Caco-2 (cell line): ENCODE measurements at regions of chr1 and their contacts with region 1.

Region 1: DNA sequence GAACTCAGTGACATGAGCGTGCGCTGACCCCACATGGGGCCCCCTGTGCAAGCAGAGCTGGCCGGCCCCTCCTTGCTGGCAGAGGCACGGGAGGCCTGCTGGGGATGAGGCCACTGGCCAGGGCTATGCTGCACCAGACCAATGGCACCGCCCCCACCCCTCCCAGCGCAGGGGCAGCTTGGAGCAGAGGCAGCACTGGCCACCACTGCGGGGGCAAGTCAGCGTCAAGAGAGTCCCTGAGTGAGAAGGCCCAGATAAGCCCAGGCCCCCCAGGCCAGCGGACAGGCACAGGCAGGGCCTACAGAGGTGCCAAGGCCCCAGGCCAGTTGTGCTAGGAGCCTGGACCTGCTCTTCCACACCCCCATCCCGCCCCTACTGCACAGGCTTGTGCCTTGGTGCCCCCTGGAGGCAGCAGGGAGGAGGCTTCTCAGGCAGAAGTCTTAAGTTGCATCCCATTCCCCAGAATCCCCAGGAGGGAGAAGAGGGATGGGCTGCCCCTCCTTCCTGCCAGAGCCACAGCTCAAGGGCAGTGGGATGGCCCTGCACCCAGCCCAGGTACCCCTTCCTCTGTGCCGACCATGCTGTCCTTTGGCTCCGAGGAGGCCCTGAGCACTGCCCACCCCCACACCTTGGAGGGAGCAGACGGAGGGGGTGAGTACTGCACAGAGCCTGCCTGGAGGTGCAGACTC is 35.8 kb downstream of the EPHX1 start:
- DNase-seq: peak; percentile 85 to 87
- H3K4me3 ChIP-seq: no peak overlapping the region
- H3K4me3 Mint-ChIP-seq: no peak overlapping the region
- H3K27ac Mint-ChIP-seq: no peak overlapping the region
- H3K4me1 ChIP-seq: no peaks in the 10 kb centered on the region
- H3K4me1 Mint-ChIP-seq: no peaks in the 10 kb centered on the region
- H3K27me3 ChIP-seq: no peaks in the 10 kb centered on the region
- H3K27me3 Mint-ChIP-seq: no peaks in the 10 kb centered on the region
- CTCF ChIP-seq: peak; percentile 82

Region 2: GRCh38 chr1:225474986-225475820 is 370.5 kb before region 1 on chr1:
- CTCF ChIA-PET with region 1: no interaction called
- POLR2A ChIA-PET with region 1: no interaction called
- intact Hi-C with region 1: loop called (anchors 1 kb)
- DNase-seq: peak in 1 of 2 experiments; percentile 81
- H3K4me3 ChIP-seq: no peak overlapping the region
- H3K4me3 Mint-ChIP-seq: no peak overlapping the region
- H3K27ac Mint-ChIP-seq: no peak overlapping the region
- H3K4me1 ChIP-seq: peaks cover 11% of the 10 kb centered on the region
- H3K4me1 Mint-ChIP-seq: no peaks in the 10 kb centered on the region
- H3K27me3 ChIP-seq: no peaks in the 10 kb centered on the region
- H3K27me3 Mint-ChIP-seq: no peaks in the 10 kb centered on the region
- CTCF ChIP-seq: peak; percentile 98 to 100

Region 3: GRCh38 chr1:225554216-225554812 is 291.4 kb before region 1 on chr1:
- CTCF ChIA-PET with region 1: no interaction called
- POLR2A ChIA-PET with region 1: no interaction called
- intact Hi-C with region 1: loop called (anchors 10 kb)
- DNase-seq: peak in 1 of 2 experiments; percentile 31
- H3K4me3 ChIP-seq: no peak overlapping the region
- H3K4me3 Mint-ChIP-seq: no peak overlapping the region
- H3K27ac Mint-ChIP-seq: no peak overlapping the region
- H3K4me1 ChIP-seq: no peaks in the 10 kb centered on the region
- H3K4me1 Mint-ChIP-seq: no peaks in the 10 kb centered on the region
- H3K27me3 ChIP-seq: no peaks in the 10 kb centered on the region
- H3K27me3 Mint-ChIP-seq: no peaks in the 10 kb centered on the region
- CTCF ChIP-seq: peak; percentile 50 to 56

Region 4: DNA sequence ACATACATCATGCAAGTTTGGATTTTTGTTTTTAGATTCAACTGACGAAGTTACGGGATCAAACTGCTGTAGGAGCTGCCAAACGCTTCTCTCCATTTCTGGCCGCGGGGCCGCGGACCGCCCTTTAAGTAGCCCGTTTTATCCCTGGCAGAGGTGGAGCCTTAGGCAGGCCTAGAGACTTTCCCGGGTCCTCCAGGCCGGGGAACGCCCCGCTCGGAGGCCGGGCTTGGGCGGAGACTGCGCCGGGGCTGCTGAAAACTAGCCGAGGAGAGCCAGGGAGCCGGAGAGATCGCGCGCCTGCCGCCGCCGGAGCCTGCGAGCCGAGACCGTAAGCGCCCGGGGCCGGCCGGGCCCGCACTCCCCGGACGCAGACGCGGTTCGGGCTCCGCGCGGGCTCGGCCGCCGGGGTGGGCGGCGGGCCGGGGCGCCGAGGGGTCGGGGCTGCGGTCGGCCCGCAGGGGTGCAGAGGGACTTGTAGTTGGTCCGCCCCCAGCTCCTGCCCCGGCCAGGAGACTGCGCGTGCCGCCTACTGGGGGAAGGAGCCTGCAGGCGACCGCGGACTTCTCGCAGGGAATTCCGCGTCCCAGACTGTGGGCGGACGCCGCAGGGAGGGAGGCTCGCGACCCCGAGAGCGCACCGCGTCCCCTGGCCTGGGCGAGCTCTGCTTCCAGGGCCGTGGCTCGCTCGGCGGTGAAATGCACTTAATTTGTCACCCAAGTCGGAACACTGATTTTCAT is 35.7 kb before region 1 on chr1 and contains the start of gene EPHX1:
- CTCF ChIA-PET with region 1: interaction called, 3 read pairs
- POLR2A ChIA-PET with region 1: no interaction called
- intact Hi-C with region 1: loop called (anchors 2 kb)
- DNase-seq: peak; percentile 89 to 93
- H3K4me3 ChIP-seq: peak within 1 kb of the TSS; percentile 89
- H3K4me3 Mint-ChIP-seq: peak within 1 kb of the TSS; percentile 80
- H3K27ac Mint-ChIP-seq: peak within 1 kb of the TSS; percentile 43
- H3K4me1 ChIP-seq: peaks cover 33% of the 10 kb centered on the region
- H3K4me1 Mint-ChIP-seq: peaks cover 27% of the 10 kb centered on the region
- H3K27me3 ChIP-seq: no peaks in the 10 kb centered on the region
- H3K27me3 Mint-ChIP-seq: no peaks in the 10 kb centered on the region
- CTCF ChIP-seq: peak; percentile 16 to 53
- total RNA-seq, gene EPHX1: 73.7 and 88.5 TPM in 2 replicates